Right ventricle myocardium superior (tissue), 1 donor: ENCODE measurements at regions of chr20 and their contacts with region 1.

Region 1: GRCh38 chr20:11544029-11544678 is 373.5 kb upstream of the BTBD3 start:
- DNase-seq: no peak
- ATAC-seq: peak; percentile 62

Region 2: GRCh38 chr20:9978397-9979004 is 1565.7 kb before region 1 on chr20:
- intact Hi-C with region 1: loop called (anchors 5 kb)
- DNase-seq: no peak
- ATAC-seq: peak; percentile 87

Region 3: DNA sequence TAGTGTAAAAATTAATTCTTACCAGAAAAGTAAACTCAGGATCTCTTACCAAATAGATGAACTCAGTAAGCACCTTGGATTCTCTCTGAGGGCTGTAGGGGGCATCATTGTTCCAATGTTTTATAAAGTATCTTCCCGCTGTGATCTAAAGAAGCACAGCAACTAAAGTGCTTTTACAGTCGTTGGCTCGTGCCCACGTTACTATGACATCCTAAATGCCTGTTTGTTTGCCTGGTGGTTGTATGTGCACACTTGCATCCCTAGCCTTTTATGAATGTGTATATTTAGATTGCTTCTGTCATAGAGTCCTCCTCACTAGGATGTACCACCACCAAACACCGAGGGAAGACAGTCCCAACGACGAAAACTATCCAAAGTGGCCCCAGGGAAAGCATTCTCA is 1074.6 kb before region 1 on chr20:
- intact Hi-C with region 1: loop called (anchors 10 kb)
- DNase-seq: peak; percentile 42
- ATAC-seq: peak; percentile 76

Region 4: DNA sequence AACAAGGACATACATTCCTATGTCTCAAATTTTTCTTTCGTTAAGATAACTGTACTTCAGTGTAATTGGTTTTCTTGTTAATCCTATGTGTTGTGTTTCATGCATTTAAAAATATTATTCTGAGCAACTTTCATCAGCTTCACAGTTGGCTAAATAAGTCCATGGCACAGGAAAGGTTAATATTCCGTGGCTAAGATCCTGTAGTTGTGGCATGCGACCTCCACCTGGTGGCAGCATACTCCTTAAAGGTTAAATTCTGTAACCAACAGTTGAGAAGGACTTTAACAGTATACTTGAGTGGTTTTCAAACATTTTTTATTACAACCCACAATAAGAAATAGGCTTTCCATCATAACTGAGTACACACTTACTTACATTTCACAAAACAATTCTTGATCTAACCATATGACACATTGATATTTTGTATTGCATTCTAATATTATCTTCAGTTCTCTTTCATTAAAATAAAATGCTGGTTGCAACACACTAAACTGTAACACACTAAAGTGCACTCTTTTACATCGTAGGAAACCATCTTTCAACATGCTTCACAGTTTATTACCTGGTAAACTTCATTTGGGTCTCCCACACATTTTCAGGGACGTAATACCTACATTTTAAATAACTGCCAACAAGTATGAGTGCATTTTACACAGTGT is 990.7 kb before region 1 on chr20:
- intact Hi-C with region 1: loop called (anchors 10 kb)
- DNase-seq: peak; percentile 79
- ATAC-seq: peak; percentile 82

Region 5: GRCh38 chr20:11159728-11160127 is 384.4 kb before region 1 on chr20:
- intact Hi-C with region 1: no loop called
- DNase-seq: no peak
- ATAC-seq: peak; percentile 69